OCI-LY7 (cell line): ENCODE measurements at regions of chr3 and their contacts with region 1.

Region 1: DNA sequence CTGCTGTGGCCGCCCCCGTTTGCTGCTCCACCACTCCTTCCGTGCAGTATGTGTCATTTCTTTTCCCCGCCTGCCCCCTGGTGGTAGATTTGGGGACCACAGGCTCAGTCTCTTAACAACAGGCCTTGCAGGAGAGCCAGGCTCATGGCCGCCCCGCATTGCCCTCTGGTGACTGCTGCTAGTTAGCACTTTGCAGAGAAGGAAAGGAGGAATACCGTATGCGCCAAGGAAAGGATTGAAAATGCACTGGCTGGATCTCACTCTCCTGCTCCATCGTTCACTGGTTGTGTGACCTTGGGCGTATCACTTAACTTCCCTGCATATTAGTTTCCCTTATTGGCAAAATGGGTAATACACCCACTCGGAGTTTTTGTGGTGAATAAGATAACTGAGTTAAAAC is 39.3 kb upstream of the PXYLP1 start:
- DNase-seq: peak; percentile 86
- H3K4me3 ChIP-seq: no peak overlapping the region
- H3K27ac ChIP-seq: no peak overlapping the region
- H3K4me1 ChIP-seq: no peaks in the 10 kb centered on the region
- CTCF ChIP-seq: peak; percentile 98

Region 2: GRCh38 chr3:140898340-140899180 is 293.8 kb before region 1 on chr3:
- CTCF ChIA-PET with region 1: no interaction called
- POLR2A ChIA-PET with region 1: no interaction called
- intact Hi-C with region 1: loop called (anchors 1 kb)
- DNase-seq: peak; percentile 62
- H3K4me3 ChIP-seq: no peak overlapping the region
- H3K27ac ChIP-seq: no peak overlapping the region
- H3K4me1 ChIP-seq: no peaks in the 10 kb centered on the region
- CTCF ChIP-seq: peak; percentile 88

Region 3: GRCh38 chr3:140922634-140923033 is 269.7 kb before region 1 on chr3:
- CTCF ChIA-PET with region 1: no interaction called
- POLR2A ChIA-PET with region 1: no interaction called
- intact Hi-C with region 1: loop called (anchors 10 kb)
- DNase-seq: peak; percentile 24
- H3K4me3 ChIP-seq: no peak overlapping the region
- H3K27ac ChIP-seq: no peak overlapping the region
- H3K4me1 ChIP-seq: no peaks in the 10 kb centered on the region
- CTCF ChIP-seq: peak; percentile 74

Region 4: DNA sequence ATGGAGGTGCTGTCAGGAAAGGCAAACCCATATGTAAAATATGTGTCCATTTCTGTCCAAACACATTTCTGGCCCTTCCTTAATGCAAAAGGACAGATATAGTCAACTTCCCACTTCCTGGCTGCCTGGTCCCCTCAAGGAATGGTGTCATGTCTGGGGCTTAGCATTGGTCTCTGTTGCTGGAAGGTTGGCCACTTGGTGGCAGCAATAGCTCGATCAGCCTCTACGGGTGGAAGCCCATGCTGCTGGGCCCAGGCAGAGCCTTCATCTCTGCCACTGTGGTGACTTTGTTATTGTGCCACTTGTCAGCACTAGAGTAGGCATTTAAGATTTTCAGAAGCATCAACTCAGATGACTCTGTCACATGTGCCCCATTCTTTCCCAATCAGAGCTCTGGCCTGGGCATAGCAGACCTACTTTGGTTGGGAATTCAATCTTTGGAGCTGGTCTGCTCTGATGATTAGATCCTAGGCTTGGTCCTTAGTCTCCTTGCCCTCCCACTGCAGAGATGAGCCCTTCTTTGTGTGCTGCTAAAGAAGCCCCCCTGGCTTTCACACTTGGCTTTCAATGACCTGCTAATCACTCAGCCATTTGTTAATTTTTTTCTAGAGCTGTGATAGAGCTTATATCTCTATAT is 192.2 kb before region 1 on chr3:
- CTCF ChIA-PET with region 1: no interaction called
- POLR2A ChIA-PET with region 1: no interaction called
- intact Hi-C with region 1: loop called (anchors 1 kb)
- DNase-seq: peak; percentile 39
- H3K4me3 ChIP-seq: no peak overlapping the region
- H3K27ac ChIP-seq: no peak overlapping the region
- H3K4me1 ChIP-seq: no peaks in the 10 kb centered on the region
- CTCF ChIP-seq: peak; percentile 77

Region 5: DNA sequence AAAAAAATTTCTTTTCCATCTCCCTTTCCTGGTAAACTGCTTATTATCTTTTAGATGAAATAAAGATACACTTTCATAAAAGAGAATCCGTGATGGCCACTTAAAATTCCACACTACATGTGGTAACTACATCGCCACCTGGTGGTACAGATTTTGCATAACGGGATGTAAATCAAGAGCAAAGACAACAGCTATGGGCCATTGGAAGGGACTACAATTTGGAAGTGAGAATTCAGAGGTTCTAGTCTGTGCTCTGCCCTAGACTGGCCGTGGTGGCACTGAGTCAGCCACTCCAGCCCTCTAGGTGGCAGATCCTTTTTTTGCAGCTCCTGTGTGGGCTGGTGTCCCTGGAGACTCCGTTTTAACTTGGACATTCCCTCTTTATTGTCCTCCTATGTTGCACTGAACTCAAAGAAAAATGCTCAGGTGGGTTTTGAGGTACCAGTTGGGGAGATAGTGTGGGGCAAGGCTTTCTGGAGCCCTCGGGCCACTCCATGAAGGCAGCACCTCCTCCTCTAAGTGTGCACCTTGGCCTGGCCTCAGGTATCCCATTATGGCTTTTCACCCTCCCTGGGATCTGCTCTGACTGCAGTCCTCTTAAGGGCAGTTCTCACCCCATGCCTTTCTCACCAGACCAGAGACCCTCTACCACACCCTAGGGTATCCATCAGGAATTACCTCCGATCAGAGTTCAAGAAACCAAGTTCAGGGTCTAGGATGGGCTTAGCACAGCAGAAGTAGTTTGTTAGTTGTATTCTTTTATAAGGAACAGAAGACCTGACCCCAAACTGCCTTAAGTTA is 86.3 kb before region 1 on chr3:
- CTCF ChIA-PET with region 1: no interaction called
- POLR2A ChIA-PET with region 1: no interaction called
- intact Hi-C with region 1: loop called (anchors 10 kb)
- DNase-seq: peak; percentile 81
- H3K4me3 ChIP-seq: no peak overlapping the region
- H3K27ac ChIP-seq: no peak overlapping the region
- H3K4me1 ChIP-seq: no peaks in the 10 kb centered on the region
- CTCF ChIP-seq: peak; percentile 93

Region 6: DNA sequence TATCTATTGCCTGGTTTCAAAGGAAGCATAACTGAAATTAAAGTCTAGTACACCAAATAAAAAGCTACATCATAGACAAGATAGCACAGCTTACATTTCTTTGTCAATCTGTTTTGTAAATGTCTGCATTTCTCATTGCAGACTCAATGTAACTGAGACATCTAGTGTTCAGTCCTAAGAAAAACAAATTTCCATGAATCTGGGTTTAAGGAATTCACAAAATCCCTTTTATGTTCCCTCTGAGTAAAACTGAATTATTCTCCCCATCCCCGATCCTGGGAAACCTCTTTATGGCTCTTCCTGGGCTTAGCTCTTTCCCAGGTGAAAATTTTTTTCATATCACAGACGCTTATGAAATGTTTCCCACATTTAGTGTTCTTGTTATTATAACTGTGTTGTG is 272.9 kb after region 1 on chr3:
- CTCF ChIA-PET with region 1: no interaction called
- POLR2A ChIA-PET with region 1: no interaction called
- intact Hi-C with region 1: no loop called
- DNase-seq: no peak
- H3K4me3 ChIP-seq: no peak overlapping the region
- H3K27ac ChIP-seq: no peak overlapping the region
- H3K4me1 ChIP-seq: no peaks in the 10 kb centered on the region
- CTCF ChIP-seq: no peak